Naive thymus-derived CD4-positive, alpha-beta T cell (primary cell): ENCODE measurements at regions of chr1 and their contacts with region 1.

Region 1: GRCh38 chr1:85259118-85259911 is at the start of gene C1orf52:
- DNase-seq: peak; percentile 92 to 99 (median 96)
- ATAC-seq: peak; percentile 99
- H3K4me3 ChIP-seq: peak within 1 kb of the TSS; percentile 83
- H3K4me3 Mint-ChIP-seq: peak within 1 kb of the TSS; percentile 93 to 99 (median 98)
- H3K27ac ChIP-seq: peak within 1 kb of the TSS; percentile 90
- H3K27ac Mint-ChIP-seq: peak within 1 kb of the TSS; percentile 91 to 98 (median 96)
- H3K4me1 ChIP-seq: peaks cover 14 to 16% of the 10 kb centered on the region in 2 donors
- H3K4me1 Mint-ChIP-seq: peaks cover 19 to 52% (median 45%) of the 10 kb centered on the region in 7 donors
- H3K27me3 ChIP-seq: no peaks in the 10 kb centered on the region
- H3K27me3 Mint-ChIP-seq: no peaks in the 10 kb centered on the region
- total RNA-seq, gene C1orf52: 25.7 to 55.4 (median 46.1) TPM

Region 2: DNA sequence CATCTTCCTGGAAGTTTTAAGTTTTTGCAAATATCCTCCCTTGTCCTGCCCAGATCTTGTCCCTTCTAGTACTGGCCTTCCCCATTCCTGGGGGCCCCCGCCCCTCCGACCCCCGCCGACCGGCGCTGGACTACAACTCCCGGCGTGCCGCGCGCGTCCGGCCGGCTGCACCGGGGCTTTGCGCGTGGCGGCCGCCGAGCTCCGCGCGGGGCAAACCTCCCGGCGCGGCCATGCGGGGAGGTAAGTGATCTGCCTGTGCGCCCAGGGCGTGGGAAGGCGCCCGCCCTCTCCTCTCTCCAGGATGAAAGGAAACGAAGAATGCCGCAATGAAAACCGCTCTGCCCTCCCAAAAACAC is 961.0 kb before region 1 on chr1:
- CTCF ChIA-PET with region 1: no interaction called
- POLR2A ChIA-PET with region 1: no interaction called
- intact Hi-C with region 1: loop called in 1 of 2 experiments (anchors 5 kb)
- DNase-seq: peak; percentile 40 to 65 (median 46)
- ATAC-seq: peak; percentile 88
- H3K4me3 ChIP-seq: peak overlapping the region; percentile 92
- H3K4me3 Mint-ChIP-seq: peak overlapping the region; percentile 83 to 95 (median 90)
- H3K27ac ChIP-seq: peak overlapping the region; percentile 69
- H3K27ac Mint-ChIP-seq: peak overlapping the region; percentile 67 to 85 (median 79)
- H3K4me1 ChIP-seq: peaks cover 4 to 25% of the 10 kb centered on the region in 2 donors
- H3K4me1 Mint-ChIP-seq: peaks cover 17 to 52% (median 42%) of the 10 kb centered on the region in 7 donors
- H3K27me3 ChIP-seq: no peaks in the 10 kb centered on the region
- H3K27me3 Mint-ChIP-seq: peaks cover 0 to 16% (median 6%) of the 10 kb centered on the region in 5 donors

Region 3: DNA sequence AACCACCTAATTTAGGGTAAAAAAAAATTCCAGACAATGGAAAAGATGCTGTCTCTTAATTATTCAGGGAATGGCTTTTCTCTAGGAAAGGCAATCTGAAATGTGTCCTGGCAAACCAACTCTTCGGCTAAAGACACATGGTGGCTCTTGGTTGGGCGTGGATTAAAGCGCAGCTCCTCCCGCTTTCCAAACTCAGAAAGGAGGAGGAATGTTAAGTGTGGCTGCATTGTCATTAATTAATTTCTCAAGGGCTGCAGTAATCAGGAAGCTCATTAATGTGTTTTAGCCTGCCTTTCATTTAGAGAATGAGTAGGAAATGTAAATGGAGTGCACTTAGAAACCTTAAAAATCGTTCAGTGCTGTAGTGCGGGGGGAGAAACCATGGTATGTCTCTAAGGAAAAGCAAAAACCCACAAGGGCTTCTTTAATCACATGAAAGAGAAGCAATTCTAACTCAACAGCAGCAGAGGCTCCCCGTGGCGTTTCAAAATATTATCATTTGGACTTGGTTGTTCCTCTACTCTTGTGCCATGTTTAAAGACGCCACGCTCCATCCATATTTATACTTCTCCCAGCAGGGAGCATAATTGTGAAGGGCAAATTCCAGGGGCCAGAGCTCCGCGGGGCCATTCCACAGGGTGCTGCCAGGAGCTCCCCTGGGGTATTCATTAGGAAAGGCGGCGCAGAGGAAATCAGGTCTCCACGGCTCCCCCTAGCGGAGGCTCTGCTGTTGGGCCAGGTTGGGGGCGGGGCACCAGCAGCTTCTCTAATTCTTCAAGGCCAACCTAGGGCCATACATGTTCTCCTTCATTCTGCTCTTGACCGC is 477.2 kb before region 1 on chr1:
- CTCF ChIA-PET with region 1: no interaction called
- POLR2A ChIA-PET with region 1: no interaction called
- intact Hi-C with region 1: loop called in 1 of 2 experiments (anchors 5 kb)
- DNase-seq: peak; percentile 63 to 82 (median 75)
- ATAC-seq: peak; percentile 93
- H3K4me3 ChIP-seq: peak overlapping the region; percentile 23
- H3K4me3 Mint-ChIP-seq: peak overlapping the region; percentile 60 to 89 (median 84)
- H3K27ac ChIP-seq: peak overlapping the region; percentile 26
- H3K27ac Mint-ChIP-seq: peak overlapping the region in 8 of 9 donors; percentile 48 to 88 (median 78)
- H3K4me1 ChIP-seq: peaks cover 0 to 14% of the 10 kb centered on the region in 2 donors
- H3K4me1 Mint-ChIP-seq: peaks cover 17 to 35% (median 30%) of the 10 kb centered on the region in 7 donors
- H3K27me3 ChIP-seq: no peaks in the 10 kb centered on the region
- H3K27me3 Mint-ChIP-seq: peaks cover 0 to 7% (median 0%) of the 10 kb centered on the region in 5 donors

Region 4: DNA sequence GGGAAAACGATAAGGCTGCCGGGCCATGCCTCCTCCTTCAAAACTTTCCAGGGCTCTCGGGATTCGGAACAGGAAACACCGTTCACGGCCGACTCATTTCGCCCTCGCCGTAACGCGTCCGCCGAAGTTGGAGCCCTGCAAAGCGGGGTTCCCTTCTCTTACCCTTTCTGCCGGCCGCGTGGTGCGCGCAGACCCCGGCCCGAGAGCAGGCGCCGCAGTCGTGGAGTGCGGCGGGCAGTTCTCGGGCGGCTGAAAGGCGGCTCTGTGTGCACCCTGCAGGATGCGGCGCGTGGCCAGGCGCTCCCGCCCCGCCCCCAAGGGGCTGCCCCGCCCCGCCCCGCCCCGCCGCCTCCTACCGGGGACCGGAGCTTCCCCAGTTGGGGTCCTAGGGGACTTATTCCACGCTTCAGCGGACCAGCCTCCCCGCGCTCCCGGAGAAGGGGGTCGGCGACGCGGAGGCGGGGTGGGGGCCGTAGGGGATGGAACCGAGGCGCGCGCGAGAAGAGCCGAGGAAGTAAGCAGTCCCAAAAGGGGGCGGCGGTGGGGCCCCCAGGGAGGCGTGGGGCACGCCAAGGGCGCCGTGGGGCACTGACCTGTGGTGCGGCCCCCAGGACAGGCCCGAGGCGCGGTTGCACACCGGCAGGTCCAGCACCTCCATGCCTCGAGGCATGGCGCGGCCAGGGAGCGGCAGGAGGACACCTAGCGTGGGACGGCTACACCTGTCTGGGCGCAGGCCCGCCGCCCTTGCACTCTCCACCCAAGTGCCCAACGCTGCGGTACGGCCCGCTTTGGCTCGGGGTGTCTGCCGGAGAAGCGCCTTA is 262.3 kb before region 1 on chr1 and contains the start of gene MCOLN2:
- CTCF ChIA-PET with region 1: no interaction called
- POLR2A ChIA-PET with region 1: no interaction called
- intact Hi-C with region 1: loop called in 1 of 2 experiments (anchors 2 kb)
- DNase-seq: peak; percentile 7 to 69 (median 37)
- ATAC-seq: peak; percentile 89
- H3K4me3 ChIP-seq: peak within 1 kb of the TSS; percentile 77
- H3K4me3 Mint-ChIP-seq: peak within 1 kb of the TSS; percentile 80 to 95 (median 86)
- H3K27ac ChIP-seq: no peak within 1 kb of the TSS
- H3K27ac Mint-ChIP-seq: peak within 1 kb of the TSS in 4 of 9 donors; percentile 33 to 85 (median 66)
- H3K4me1 ChIP-seq: peaks cover 17 to 26% of the 10 kb centered on the region in 2 donors
- H3K4me1 Mint-ChIP-seq: peaks cover 13 to 57% (median 16%) of the 10 kb centered on the region in 7 donors
- H3K27me3 ChIP-seq: peaks cover 0 to 13% of the 10 kb centered on the region in 2 donors
- H3K27me3 Mint-ChIP-seq: peaks cover 28 to 55% (median 35%) of the 10 kb centered on the region in 5 donors
- total RNA-seq, gene MCOLN2: 2.5 to 35.7 (median 3.1) TPM

Region 5: DNA sequence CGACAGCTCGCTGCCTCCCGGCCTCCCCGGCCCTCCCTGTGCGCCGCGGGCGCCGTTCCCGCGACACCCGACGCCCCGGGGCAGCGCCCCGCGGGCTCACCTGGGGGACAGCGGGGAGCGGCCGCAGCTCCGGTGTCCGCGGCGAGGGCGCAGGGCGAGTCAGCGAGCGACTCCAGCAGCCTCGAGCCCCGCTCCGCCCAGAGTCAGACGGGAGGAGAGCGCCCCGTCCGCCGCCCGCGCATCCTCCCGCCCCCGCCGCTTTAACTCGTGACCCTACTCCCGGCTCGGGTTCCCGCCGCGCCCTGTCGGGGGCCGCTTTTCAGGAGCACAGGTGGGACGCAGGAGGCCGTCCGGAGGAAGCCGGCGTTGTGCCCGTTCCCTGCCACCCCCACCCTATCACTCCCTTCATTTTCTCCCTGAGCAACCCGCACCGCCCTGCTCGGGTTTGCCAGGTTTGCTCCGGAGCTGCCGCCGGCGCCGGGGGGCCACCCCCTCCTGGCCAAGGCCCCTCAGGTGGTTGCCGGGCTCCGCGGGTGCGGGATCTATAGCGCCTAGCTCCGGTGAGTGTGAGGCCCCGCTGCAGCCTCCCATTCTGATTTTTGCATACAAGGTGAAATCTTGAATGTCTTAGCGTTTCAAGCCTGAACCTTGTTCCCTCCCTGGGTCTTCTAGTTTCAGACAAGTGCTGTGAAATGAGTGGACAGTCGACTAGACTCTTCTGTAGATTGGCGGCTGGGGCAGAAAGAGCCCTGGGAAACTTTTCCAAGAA is 210.8 kb before region 1 on chr1 and contains the start of gene MCOLN3:
- CTCF ChIA-PET with region 1: no interaction called
- POLR2A ChIA-PET with region 1: no interaction called
- intact Hi-C with region 1: loop called (anchors 5 kb)
- DNase-seq: peak in 7 of 9 donors; percentile 9 to 56 (median 24)
- ATAC-seq: peak; percentile 67
- H3K4me3 ChIP-seq: peak within 1 kb of the TSS; percentile 38
- H3K4me3 Mint-ChIP-seq: peak within 1 kb of the TSS; percentile 70 to 86 (median 80)
- H3K27ac ChIP-seq: no peak within 1 kb of the TSS
- H3K27ac Mint-ChIP-seq: peak within 1 kb of the TSS in 1 of 9 donors; percentile 55
- H3K4me1 ChIP-seq: peaks cover 10 to 21% of the 10 kb centered on the region in 2 donors
- H3K4me1 Mint-ChIP-seq: peaks cover 7 to 35% (median 29%) of the 10 kb centered on the region in 7 donors
- H3K27me3 ChIP-seq: peaks cover 11 to 13% of the 10 kb centered on the region in 2 donors
- H3K27me3 Mint-ChIP-seq: peaks cover 47 to 60% (median 54%) of the 10 kb centered on the region in 5 donors
- total RNA-seq, gene MCOLN3: 0.77 to 11.1 (median 0.95) TPM

Region 6: DNA sequence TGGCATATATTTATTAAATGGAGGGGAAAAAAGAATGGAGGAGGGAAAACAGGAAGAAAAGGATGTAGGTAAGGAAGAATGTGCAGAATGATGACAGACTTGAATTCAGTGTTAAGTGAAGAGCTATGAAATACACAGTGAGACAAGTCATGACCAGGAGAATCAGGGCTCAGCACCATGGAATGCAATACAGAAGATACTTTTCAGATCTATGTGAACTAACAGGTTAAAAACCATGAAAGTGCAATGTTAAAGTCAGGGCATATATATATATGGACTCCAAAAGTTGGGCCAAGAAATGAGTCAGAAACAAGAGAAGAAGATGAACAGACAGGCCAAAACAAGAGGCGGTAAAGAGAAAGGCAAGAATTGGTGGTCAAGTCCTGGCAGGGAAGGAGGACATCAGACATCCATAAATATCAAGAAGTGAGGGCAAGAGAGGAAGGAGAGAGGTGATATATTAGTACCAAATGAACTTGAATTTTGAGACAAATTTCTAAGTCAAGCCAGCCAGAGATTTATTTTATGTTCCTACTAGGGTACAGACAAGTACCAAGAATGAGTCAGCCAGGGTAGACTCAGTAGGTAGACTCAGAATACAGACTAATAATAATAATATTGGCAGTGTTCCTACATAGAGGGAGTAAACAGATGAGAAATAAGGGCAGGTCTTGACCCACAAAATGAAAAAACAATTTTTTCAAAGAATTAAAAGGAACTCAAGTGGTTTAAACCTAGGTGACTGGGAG is 171.5 kb before region 1 on chr1:
- CTCF ChIA-PET with region 1: no interaction called
- POLR2A ChIA-PET with region 1: no interaction called
- intact Hi-C with region 1: no loop called
- DNase-seq: no peak
- ATAC-seq: no peak
- H3K4me3 ChIP-seq: no peak overlapping the region
- H3K4me3 Mint-ChIP-seq: no peak overlapping the region
- H3K27ac ChIP-seq: no peak overlapping the region
- H3K27ac Mint-ChIP-seq: no peak overlapping the region
- H3K4me1 ChIP-seq: peaks cover 0 to 6% of the 10 kb centered on the region in 2 donors
- H3K4me1 Mint-ChIP-seq: peaks cover 0 to 12% (median 8%) of the 10 kb centered on the region in 7 donors
- H3K27me3 ChIP-seq: no peaks in the 10 kb centered on the region
- H3K27me3 Mint-ChIP-seq: peaks cover 2 to 37% (median 7%) of the 10 kb centered on the region in 5 donors

Region 7: GRCh38 chr1:85109475-85109874 is 149.8 kb before region 1 on chr1:
- CTCF ChIA-PET with region 1: interaction called, 112 read pairs
- POLR2A ChIA-PET with region 1: interaction called, 11 read pairs
- intact Hi-C with region 1: loop called (anchors 1 kb)
- DNase-seq: peak in 7 of 9 donors; percentile 27 to 57 (median 43)
- ATAC-seq: peak; percentile 69
- H3K4me3 ChIP-seq: no peak overlapping the region
- H3K4me3 Mint-ChIP-seq: no peak overlapping the region
- H3K27ac ChIP-seq: no peak overlapping the region
- H3K27ac Mint-ChIP-seq: peak overlapping the region in 1 of 9 donors; percentile 41
- H3K4me1 ChIP-seq: no peaks in the 10 kb centered on the region
- H3K4me1 Mint-ChIP-seq: no peaks in the 10 kb centered on the region
- H3K27me3 ChIP-seq: no peaks in the 10 kb centered on the region
- H3K27me3 Mint-ChIP-seq: peaks cover 0 to 31% (median 0%) of the 10 kb centered on the region in 5 donors

Region 8: GRCh38 chr1:85240174-85240601 is 19.1 kb before region 1 on chr1:
- CTCF ChIA-PET with region 1: interaction called, 10 read pairs
- POLR2A ChIA-PET with region 1: interaction called, 6 read pairs
- intact Hi-C with region 1: loop called in 1 of 2 experiments (anchors 2 kb)
- DNase-seq: peak in 1 of 9 donors; percentile 26
- ATAC-seq: peak; percentile 62
- H3K4me3 ChIP-seq: no peak overlapping the region
- H3K4me3 Mint-ChIP-seq: peak overlapping the region in 6 of 10 donors; percentile 17 to 51 (median 24)
- H3K27ac ChIP-seq: no peak overlapping the region
- H3K27ac Mint-ChIP-seq: peak overlapping the region in 6 of 9 donors; percentile 6 to 89 (median 79)
- H3K4me1 ChIP-seq: peaks cover 0 to 10% of the 10 kb centered on the region in 2 donors
- H3K4me1 Mint-ChIP-seq: peaks cover 1 to 22% (median 17%) of the 10 kb centered on the region in 7 donors
- H3K27me3 ChIP-seq: no peaks in the 10 kb centered on the region
- H3K27me3 Mint-ChIP-seq: peaks cover 0 to 9% (median 0%) of the 10 kb centered on the region in 5 donors

Region 9: DNA sequence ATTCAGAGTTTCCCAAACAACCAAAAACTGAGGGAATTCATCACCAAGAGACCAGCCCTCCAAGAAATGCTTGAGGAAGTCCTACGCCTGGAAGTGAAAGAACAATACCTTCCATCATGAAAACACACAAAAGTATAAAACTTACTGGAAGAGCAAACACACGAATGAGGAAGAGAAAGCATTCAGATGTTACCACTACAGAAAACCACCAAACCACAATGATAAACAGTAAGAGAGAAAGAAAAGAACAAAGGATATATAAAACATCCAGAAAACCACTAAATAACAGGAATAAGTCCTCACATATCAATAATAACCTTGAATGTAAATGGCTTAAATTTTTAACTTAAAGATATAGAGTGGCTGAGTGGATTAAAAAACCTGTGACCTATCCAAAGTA is 75.6 kb after region 1 on chr1:
- CTCF ChIA-PET with region 1: no interaction called
- POLR2A ChIA-PET with region 1: no interaction called
- intact Hi-C with region 1: no loop called
- DNase-seq: no peak
- ATAC-seq: no peak
- H3K4me3 ChIP-seq: no peak overlapping the region
- H3K4me3 Mint-ChIP-seq: peak overlapping the region in 1 of 10 donors; percentile 39
- H3K27ac ChIP-seq: no peak overlapping the region
- H3K27ac Mint-ChIP-seq: no peak overlapping the region
- H3K4me1 ChIP-seq: no peaks in the 10 kb centered on the region
- H3K4me1 Mint-ChIP-seq: peaks cover 8 to 22% (median 15%) of the 10 kb centered on the region in 7 donors
- H3K27me3 ChIP-seq: no peaks in the 10 kb centered on the region
- H3K27me3 Mint-ChIP-seq: peaks cover 0 to 36% (median 10%) of the 10 kb centered on the region in 5 donors